WTC11 (cell line): ENCODE measurements at regions of chr11 and their contacts with region 1.

Region 1: DNA sequence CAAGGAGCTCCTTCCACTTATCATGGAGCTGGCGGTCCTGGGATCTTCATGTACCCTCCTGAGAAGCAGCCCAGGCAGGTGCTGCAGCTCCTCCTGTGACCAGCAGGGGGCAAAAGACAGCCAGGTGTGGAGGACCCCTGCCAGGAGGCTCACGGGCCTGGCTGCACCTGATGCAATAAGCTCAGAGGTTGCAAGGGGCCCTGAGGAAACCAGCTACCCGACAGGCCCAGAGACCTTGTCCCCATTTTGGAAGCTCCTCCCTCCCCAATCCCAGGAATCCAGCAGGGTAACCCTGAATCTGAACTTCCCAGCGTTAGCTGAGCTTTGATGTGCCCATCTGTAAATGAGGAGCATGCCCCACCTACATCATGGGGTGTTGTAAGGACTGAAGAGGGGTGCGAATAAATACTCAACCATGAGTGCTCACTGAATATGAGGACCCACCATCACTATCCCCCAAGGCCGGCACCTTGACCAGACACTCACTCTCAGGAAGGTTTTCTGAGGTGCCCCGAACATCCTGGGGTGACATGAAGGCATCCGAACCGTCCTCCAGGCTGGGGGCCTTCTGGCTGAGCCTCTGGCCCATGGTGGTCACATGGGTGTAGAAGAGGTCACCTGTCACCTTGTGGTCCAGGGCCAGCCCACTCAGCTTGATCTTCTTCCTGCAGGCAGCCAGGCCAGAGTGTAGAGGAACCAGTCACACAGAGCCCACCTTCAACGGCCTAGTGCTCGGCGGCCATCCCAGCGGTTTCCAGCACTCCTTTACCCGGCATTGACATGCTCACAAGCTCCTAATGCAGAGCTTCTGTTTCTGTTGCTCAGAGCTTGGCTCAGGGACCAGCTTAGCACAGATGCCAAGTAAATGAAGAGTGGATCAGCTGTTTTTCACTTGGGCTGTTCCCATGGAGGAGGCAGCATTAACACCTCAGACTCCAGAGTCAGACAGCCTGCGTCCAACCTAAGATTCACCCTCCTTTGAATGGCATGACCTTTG is 21.7 kb downstream of the SLC43A1 start:
- DNase-seq: peak; percentile 95
- ATAC-seq: peak; percentile 83
- H3K4me3 Mint-ChIP-seq: no peak overlapping the region
- H3K27ac Mint-ChIP-seq: peak overlapping the region; percentile 96
- H3K4me1 Mint-ChIP-seq: peaks cover 15% of the 10 kb centered on the region
- H3K27me3 Mint-ChIP-seq: no peaks in the 10 kb centered on the region; the same call in 1 of the 2 replicates
- CTCF ChIP-seq: peak; percentile 93

Region 2: GRCh38 chr11:57474017-57474802 is 19.6 kb before region 1 on chr11:
- CTCF ChIA-PET with region 1: interaction called, 97 read pairs
- POLR2A ChIA-PET with region 1: no interaction called
- DNase-seq: no peak
- ATAC-seq: peak; percentile 29
- H3K4me3 Mint-ChIP-seq: no peak overlapping the region
- H3K27ac Mint-ChIP-seq: no peak overlapping the region
- H3K4me1 Mint-ChIP-seq: peaks cover 45% of the 10 kb centered on the region
- H3K27me3 Mint-ChIP-seq: peaks cover 46% of the 10 kb centered on the region
- CTCF ChIP-seq: no peak

Region 3: GRCh38 chr11:57504511-57504910 is 10.7 kb after region 1 on chr11:
- CTCF ChIA-PET with region 1: interaction called, 66 read pairs
- POLR2A ChIA-PET with region 1: no interaction called
- DNase-seq: no peak
- ATAC-seq: no peak
- H3K4me3 Mint-ChIP-seq: no peak overlapping the region
- H3K27ac Mint-ChIP-seq: no peak overlapping the region
- H3K4me1 Mint-ChIP-seq: peaks cover 40% of the 10 kb centered on the region
- H3K27me3 Mint-ChIP-seq: no peaks in the 10 kb centered on the region
- CTCF ChIP-seq: no peak

Region 4: GRCh38 chr11:57523419-57523818 is 29.6 kb after region 1 on chr11:
- CTCF ChIA-PET with region 1: interaction called, 260 read pairs
- POLR2A ChIA-PET with region 1: interaction called, 14 read pairs
- DNase-seq: no peak
- ATAC-seq: no peak
- H3K4me3 Mint-ChIP-seq: no peak overlapping the region
- H3K27ac Mint-ChIP-seq: no peak overlapping the region
- H3K4me1 Mint-ChIP-seq: peaks cover 13% of the 10 kb centered on the region
- H3K27me3 Mint-ChIP-seq: no peaks in the 10 kb centered on the region
- CTCF ChIP-seq: no peak

Region 5: GRCh38 chr11:57546869-57547475 is 53.2 kb after region 1 on chr11:
- CTCF ChIA-PET with region 1: interaction called, 12 read pairs
- POLR2A ChIA-PET with region 1: no interaction called
- DNase-seq: peak; percentile 39
- ATAC-seq: peak; percentile 72
- H3K4me3 Mint-ChIP-seq: no peak overlapping the region
- H3K27ac Mint-ChIP-seq: peak overlapping the region; percentile 70; the same call in 1 of the 2 replicates
- H3K4me1 Mint-ChIP-seq: peaks cover 20% of the 10 kb centered on the region
- H3K27me3 Mint-ChIP-seq: no peaks in the 10 kb centered on the region; the same call in 1 of the 2 replicates
- CTCF ChIP-seq: no peak

Region 6: DNA sequence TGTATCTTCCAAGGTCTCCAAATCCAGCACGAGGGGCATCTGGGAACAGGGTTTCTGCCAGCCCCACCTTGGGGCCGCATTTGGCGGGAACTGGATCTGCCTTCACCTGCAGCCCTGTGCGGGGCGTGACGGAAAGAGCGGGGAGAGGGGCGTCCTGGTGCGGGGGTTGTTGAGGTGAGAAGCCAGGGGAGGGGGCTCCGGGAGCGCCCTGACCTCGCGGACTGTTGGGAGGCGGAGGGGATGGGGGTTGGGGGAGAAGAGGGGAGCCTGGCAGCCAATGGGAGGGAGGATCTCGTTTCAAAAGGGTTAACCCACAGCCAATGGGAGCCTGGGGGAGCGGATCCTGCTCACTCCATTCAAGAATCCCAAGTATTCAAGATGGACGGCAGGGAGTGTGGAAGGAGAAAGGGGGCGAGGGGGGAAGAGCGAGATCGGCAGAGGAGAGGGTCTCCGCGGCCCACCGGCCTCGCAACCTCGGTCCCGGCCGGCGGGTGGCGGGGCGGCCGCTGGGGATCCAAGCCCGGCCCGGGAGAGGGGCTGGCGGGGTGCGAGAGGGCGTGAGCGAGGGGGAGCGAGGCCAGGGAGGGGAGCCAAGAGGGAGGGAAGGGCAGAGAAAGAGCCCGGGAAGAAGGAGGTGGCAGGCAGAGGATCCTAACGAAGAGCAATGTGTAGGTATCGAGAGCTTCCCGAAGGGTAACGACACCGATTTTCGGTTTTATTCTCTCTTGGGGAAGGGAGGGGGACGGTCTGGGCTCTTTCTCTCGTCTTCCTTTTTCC is 144.4 kb after region 1 on chr11:
- CTCF ChIA-PET with region 1: interaction called, 32 read pairs
- POLR2A ChIA-PET with region 1: interaction called, 25 read pairs
- DNase-seq: peak; percentile 94
- ATAC-seq: peak; percentile 69
- H3K4me3 Mint-ChIP-seq: peak overlapping the region; percentile 96
- H3K27ac Mint-ChIP-seq: peak overlapping the region; percentile 99
- H3K4me1 Mint-ChIP-seq: peaks cover 48% of the 10 kb centered on the region
- H3K27me3 Mint-ChIP-seq: peaks cover 18% of the 10 kb centered on the region
- CTCF ChIP-seq: no peak